Motor neuron (in vitro differentiated cells): ENCODE measurements at regions of chr16 and their contacts with region 1.

Region 1: DNA sequence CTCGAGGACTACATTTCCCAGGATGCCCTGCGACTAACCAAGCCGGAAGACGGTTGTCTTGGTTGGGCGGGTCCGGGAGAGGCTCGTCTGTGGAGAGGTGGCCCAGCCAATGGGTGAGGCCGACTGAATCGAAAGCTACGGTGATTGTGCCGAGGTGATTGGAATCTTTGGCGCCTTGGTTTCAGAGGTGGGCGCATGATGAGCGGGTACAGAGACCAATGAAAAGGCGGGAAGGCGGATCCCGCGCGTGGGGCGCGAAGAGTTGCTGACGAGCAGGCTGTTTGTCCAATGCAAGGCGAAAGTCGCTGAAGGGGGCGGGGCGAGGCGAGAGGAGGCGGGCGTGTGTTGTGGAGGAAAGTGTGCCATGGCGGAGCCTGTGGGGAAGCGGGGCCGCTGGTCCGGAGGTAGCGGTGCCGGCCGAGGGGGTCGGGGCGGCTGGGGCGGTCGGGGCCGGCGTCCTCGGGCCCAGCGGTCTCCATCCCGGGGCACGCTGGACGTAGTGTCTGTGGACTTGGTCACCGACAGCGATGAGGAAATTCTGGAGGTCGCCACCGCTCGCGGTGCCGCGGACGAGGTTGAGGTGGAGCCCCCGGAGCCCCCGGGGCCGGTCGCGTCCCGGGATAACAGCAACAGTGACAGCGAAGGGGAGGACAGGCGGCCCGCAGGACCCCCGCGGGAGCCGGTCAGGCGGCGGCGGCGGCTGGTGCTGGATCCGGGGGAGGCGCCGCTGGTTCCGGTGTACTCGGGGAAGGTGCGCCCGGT is at the start of gene NFATC2IP:
- ATAC-seq: peak; percentile 89 to 97 (median 96)
- H3K4me3 ChIP-seq: peak within 1 kb of the TSS; percentile 73 to 93 (median 84)
- H3K27ac ChIP-seq: peak within 1 kb of the TSS; percentile 56 to 61
- H3K4me1 ChIP-seq: peaks cover 8% of the 10 kb centered on the region in 2 donors
- total RNA-seq, gene NFATC2IP: 10.2 to 51.7 (median 16.4) TPM

Region 2: DNA sequence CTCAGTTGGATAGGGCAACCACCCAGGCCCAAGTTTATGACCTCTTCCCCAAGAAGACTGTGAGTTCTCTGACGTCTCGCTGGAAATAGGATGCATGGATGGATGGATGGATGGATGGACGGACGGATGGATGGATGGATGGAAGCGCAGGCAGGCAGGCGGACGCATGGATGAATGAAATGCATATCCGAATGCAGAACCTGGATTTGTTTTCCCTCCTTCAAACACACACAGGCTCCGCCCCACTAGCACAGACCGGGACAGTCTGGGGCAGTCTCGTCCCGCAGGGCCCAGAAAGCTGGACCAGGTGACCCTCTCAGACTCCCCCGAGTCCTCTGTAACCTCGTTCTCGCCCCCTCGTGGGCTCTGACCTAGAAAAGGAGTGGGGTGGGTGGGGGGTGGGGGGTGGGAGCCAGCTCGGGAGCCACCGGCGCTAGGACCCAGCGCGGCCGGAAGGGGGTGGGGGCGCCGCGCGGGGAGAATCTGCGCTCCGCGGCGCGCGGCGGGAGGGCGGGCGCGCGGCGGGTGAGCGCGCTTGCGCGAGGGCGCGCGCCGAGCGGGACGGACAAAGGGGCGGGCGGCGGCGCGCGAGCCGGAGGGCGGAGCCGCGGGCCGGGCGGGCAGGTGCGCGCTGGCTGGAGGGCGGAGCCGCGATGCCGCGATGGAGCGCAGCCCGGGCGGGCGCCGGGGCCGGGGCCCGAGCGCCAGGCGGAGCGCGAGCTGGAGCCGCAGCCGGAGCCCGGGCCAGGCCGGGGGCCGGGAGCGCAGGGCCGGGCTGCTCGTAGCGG is 658.8 kb before region 1 on chr16 and contains the start of gene SBK1:
- in situ Hi-C with region 1: loop called in 1 of 9 experiments (anchors 25 kb)
- ATAC-seq: peak; percentile 88 to 96 (median 91)
- H3K4me3 ChIP-seq: peak within 1 kb of the TSS; percentile 84 to 96 (median 93)
- H3K27ac ChIP-seq: peak within 1 kb of the TSS; percentile 82 to 94
- H3K4me1 ChIP-seq: peaks cover 15 to 21% of the 10 kb centered on the region in 2 donors
- total RNA-seq, gene SBK1: 0.20 to 39.7 (median 19.3) TPM

Region 3: GRCh38 chr16:29198731-29199521 is 248.1 kb after region 1 on chr16:
- in situ Hi-C with region 1: no loop called
- ATAC-seq: no peak
- H3K4me3 ChIP-seq: no peak overlapping the region
- H3K27ac ChIP-seq: no peak overlapping the region
- H3K4me1 ChIP-seq: peaks cover 6 to 11% of the 10 kb centered on the region in 2 donors